Calu3 (cell line): ENCODE measurements at regions of chr19 and their contacts with region 1.

Region 1: GRCh38 chr19:54390942-54391577 is 24.2 kb upstream of the TTYH1 start:
- DNase-seq: peak; percentile 75
- H3K4me3 Mint-ChIP-seq: no peak overlapping the region
- H3K27ac Mint-ChIP-seq: no peak overlapping the region
- H3K4me1 Mint-ChIP-seq: peaks cover 15% of the 10 kb centered on the region
- H3K27me3 Mint-ChIP-seq: peaks cover 34% of the 10 kb centered on the region
- CTCF ChIP-seq: peak; percentile 90

Region 2: GRCh38 chr19:54325194-54325621 is 65.9 kb before region 1 on chr19:
- CTCF ChIA-PET with region 1: interaction called, 4 read pairs
- intact Hi-C with region 1: loop called (anchors 1 kb)
- DNase-seq: peak; percentile 56
- H3K4me3 Mint-ChIP-seq: no peak overlapping the region
- H3K27ac Mint-ChIP-seq: no peak overlapping the region
- H3K4me1 Mint-ChIP-seq: no peaks in the 10 kb centered on the region
- H3K27me3 Mint-ChIP-seq: peaks cover 49% of the 10 kb centered on the region
- CTCF ChIP-seq: peak; percentile 69

Region 3: DNA sequence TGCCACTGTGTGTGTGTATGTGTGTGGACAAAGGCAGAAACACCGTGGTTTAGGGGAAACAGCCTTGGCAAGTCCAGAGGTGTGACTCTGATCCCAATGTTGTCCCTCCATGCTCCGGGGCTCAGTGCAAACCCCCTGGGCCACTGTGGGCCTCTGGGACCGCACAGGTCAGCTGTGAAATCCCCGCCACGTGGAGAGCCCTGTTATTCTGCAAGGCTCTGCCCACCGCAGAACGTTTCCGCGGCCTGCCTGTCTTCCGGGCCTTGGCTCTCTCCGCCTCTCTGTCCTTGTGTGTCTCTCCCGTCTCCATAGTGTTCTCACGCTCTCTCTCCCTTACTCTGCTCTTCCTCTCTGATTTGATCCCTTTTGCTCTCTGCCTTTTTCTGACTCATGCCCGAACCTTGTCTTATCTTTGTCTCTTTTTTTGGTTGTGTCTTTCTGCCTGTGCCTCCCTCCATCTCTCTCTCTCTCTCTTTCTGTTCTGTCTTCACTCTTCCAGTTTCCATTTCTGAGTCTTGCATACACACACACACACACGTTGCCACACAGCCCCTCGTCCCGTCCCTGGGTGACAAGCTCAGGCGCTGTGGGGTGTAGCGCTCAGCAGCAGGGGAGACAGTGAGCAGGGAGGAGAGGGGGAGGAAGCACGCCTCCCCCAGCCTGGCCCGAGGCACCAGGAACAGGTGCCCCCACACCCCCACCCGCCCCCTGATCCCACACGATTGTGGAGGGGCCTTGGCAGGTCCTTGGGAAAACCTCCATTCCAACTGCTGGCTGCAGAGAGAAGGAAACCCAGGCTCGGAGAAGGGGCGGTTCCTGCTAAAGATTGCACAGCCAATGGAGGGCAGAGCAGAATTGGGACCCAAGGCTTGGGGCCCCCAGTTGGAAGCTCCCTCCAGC is 27.2 kb after region 1 on chr19:
- CTCF ChIA-PET with region 1: interaction called, 13 read pairs
- intact Hi-C with region 1: no loop called
- DNase-seq: no peak
- H3K4me3 Mint-ChIP-seq: no peak overlapping the region
- H3K27ac Mint-ChIP-seq: no peak overlapping the region
- H3K4me1 Mint-ChIP-seq: peaks cover 13% of the 10 kb centered on the region
- H3K27me3 Mint-ChIP-seq: peaks cover 51% of the 10 kb centered on the region
- CTCF ChIP-seq: no peak

Region 4: GRCh38 chr19:54430306-54431254 is 39.5 kb after region 1 on chr19:
- CTCF ChIA-PET with region 1: interaction called, 18 read pairs
- intact Hi-C with region 1: no loop called
- DNase-seq: peak; percentile 80
- H3K4me3 Mint-ChIP-seq: peak overlapping the region; percentile 62
- H3K27ac Mint-ChIP-seq: peak overlapping the region; percentile 83
- H3K4me1 Mint-ChIP-seq: peaks cover 46% of the 10 kb centered on the region
- H3K27me3 Mint-ChIP-seq: peaks cover 21% of the 10 kb centered on the region
- CTCF ChIP-seq: peak; percentile 17

Region 5: DNA sequence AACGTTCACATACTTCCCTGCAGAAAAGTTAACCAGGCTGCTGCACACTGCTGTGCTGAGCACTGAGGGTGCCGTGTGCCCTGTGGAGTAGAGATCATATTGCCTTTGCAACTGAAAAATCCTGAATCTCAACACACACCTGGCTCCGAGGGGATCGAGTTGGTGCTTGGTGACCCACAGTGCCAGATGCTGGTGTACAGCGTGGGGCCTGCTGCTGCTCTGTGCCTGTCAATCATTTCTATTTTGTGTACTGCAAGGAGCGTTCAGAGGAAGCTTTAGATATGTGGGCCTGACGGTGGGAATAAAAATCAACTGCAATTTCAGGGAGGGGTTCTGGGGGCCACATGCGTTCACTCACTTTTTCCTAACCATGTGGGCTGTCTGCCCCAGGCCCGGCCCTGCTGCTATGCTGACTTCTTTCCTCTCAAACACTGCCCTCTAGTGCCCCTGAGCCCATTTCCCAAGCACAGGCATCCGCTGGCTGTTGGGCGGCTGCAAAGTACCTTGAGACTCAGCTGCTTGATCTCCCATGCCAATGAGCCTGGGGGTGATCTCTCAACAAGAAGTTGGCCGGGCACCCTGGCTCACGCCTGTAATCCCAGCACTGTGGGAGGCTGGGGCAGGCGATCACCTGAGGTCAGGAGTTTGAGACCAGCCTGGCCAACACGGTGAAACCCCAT is 48.3 kb after region 1 on chr19:
- CTCF ChIA-PET with region 1: interaction called, 18 read pairs
- intact Hi-C with region 1: loop called (anchors 1 kb)
- DNase-seq: peak; percentile 67
- H3K4me3 Mint-ChIP-seq: no peak overlapping the region
- H3K27ac Mint-ChIP-seq: no peak overlapping the region
- H3K4me1 Mint-ChIP-seq: peaks cover 9% of the 10 kb centered on the region
- H3K27me3 Mint-ChIP-seq: no peaks in the 10 kb centered on the region
- CTCF ChIP-seq: no peak